ENCODE measurements at regions of chr12 and their contacts with region 1.

Region 1: DNA sequence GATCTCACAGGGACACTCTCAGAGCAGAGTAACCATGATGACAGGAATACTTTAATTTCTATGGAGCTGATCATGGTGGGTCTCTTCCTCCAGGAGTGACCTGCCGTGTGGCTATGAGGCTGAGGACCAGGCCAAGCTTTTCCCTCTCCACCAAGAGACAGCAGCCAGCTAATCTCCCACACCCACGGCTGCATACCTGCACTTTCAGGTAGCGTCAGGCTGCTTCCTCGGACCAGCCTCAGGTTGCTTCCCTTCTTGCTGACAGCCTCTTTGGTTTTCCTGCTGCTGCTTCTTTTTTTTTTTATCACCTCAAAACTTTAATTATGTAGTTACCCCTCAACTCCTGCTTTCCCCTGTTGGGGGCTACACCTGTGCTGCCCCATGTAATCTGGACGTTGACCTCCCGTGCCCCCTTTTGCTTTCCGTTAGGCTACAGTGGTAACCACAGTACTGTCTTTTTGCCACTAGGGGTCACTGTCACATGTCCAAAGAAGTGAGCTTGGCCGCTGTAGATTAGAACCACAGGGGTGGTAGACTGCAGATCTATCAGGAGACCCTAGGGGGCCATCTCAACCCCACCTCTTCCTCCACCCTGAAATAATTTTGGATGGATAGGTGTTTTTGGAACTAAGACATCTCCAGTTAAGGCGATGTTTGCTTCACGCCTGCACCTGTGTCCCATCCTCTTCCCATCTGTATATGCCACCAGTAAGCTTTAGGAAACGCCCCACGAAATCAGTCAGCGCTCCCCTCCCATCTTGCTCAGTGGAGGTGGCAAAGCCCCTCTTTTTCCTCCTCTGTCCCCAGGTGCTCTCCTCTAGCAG is 7.8 kb upstream of the PIP4K2C start:
- DNase-seq: peak; percentile 25 to 76
- H3K4me3 ChIP-seq: no peak overlapping the region
- H3K27ac ChIP-seq: no peak overlapping the region
- H3K4me1 ChIP-seq: no peaks in the 10 kb centered on the region
- H3K27me3 ChIP-seq: no peaks in the 10 kb centered on the region
- CTCF ChIP-seq: peak; percentile 71 to 99 (median 97)
- EP300 ChIP-seq: no peak
- POLR2A ChIP-seq: no peak
- RAD21 ChIP-seq: peak; percentile 88 to 94

Region 2: GRCh38 chr12:57541001-57541400 is 42.2 kb before region 1 on chr12:
- CTCF ChIA-PET with region 1: interaction called, 16 read pairs
- POLR2A ChIA-PET with region 1: no interaction called
- DNase-seq: no peak
- H3K4me3 ChIP-seq: no peak overlapping the region
- H3K27ac ChIP-seq: no peak overlapping the region
- H3K4me1 ChIP-seq: peaks cover 0 to 7% (median 1%) of the 10 kb centered on the region in 4 experiments; a peak in 5 of 7 replicates
- H3K27me3 ChIP-seq: no peaks in the 10 kb centered on the region
- CTCF ChIP-seq: no peak
- EP300 ChIP-seq: no peak
- POLR2A ChIP-seq: no peak
- RAD21 ChIP-seq: no peak

Region 3: GRCh38 chr12:57604454-57604991 is 21.3 kb after region 1 on chr12 and contains the start of gene DTX3:
- CTCF ChIA-PET with region 1: interaction called, 124 read pairs
- POLR2A ChIA-PET with region 1: interaction called, 9 read pairs
- DNase-seq: peak in 1 of 2 experiments; percentile 70
- H3K4me3 ChIP-seq: peak within 1 kb of the TSS; percentile 53 to 84 (median 78)
- H3K27ac ChIP-seq: peak within 1 kb of the TSS; percentile 93
- H3K4me1 ChIP-seq: peaks cover 7 to 11% (median 9%) of the 10 kb centered on the region in 4 experiments
- H3K27me3 ChIP-seq: 0 out of 7 replicates have a peak, but pooled peaks cover 0 to 4% (median 0%) of the 10 kb centered on the region in 4 experiments
- CTCF ChIP-seq: no peak
- EP300 ChIP-seq: no peak
- POLR2A ChIP-seq: peak in 1 of 2 experiments; percentile 18; a peak in 1 of 3 replicates
- RAD21 ChIP-seq: no peak
- total RNA-seq, gene DTX3: 41.8 and 43.4 TPM in 2 replicates

Region 4: GRCh38 chr12:57621497-57622292 is 38.5 kb after region 1 on chr12:
- CTCF ChIA-PET with region 1: interaction called, 201 read pairs
- POLR2A ChIA-PET with region 1: interaction called, 6 read pairs
- DNase-seq: peak in 1 of 2 experiments; percentile 87
- H3K4me3 ChIP-seq: peak overlapping the region; percentile 1 to 52 (median 24); a peak in 6 of 8 replicates
- H3K27ac ChIP-seq: no peak overlapping the region
- H3K4me1 ChIP-seq: peaks cover 0 to 20% (median 13%) of the 10 kb centered on the region in 4 experiments; a peak in 6 of 7 replicates
- H3K27me3 ChIP-seq: peaks cover 86 to 98% (median 98%) of the 10 kb centered on the region in 4 experiments
- CTCF ChIP-seq: peak in 2 of 3 experiments; percentile 83 to 89; a peak in 3 of 4 replicates
- EP300 ChIP-seq: no peak
- POLR2A ChIP-seq: no peak
- RAD21 ChIP-seq: peak; percentile 62 to 71

Region 5: GRCh38 chr12:57693659-57694458 is 110.6 kb after region 1 on chr12 and contains the start of gene OS9:
- CTCF ChIA-PET with region 1: interaction called, 10 read pairs
- POLR2A ChIA-PET with region 1: no interaction called
- DNase-seq: peak; percentile 85 to 97
- H3K4me3 ChIP-seq: peak within 1 kb of the TSS; percentile 66 to 99 (median 91)
- H3K27ac ChIP-seq: peak within 1 kb of the TSS; percentile 64; the same call in 1 of the 2 replicates
- H3K4me1 ChIP-seq: peaks cover 0 to 5% (median 1%) of the 10 kb centered on the region in 4 experiments; a peak in 1 of 7 replicates
- H3K27me3 ChIP-seq: no peaks in the 10 kb centered on the region
- CTCF ChIP-seq: peak; percentile 72 to 82 (median 78)
- EP300 ChIP-seq: no peak
- POLR2A ChIP-seq: peak; percentile 80 to 94
- RAD21 ChIP-seq: peak; percentile 51 to 52
- total RNA-seq, gene OS9: 71.0 and 74.3 TPM in 2 replicates

Region 6: DNA sequence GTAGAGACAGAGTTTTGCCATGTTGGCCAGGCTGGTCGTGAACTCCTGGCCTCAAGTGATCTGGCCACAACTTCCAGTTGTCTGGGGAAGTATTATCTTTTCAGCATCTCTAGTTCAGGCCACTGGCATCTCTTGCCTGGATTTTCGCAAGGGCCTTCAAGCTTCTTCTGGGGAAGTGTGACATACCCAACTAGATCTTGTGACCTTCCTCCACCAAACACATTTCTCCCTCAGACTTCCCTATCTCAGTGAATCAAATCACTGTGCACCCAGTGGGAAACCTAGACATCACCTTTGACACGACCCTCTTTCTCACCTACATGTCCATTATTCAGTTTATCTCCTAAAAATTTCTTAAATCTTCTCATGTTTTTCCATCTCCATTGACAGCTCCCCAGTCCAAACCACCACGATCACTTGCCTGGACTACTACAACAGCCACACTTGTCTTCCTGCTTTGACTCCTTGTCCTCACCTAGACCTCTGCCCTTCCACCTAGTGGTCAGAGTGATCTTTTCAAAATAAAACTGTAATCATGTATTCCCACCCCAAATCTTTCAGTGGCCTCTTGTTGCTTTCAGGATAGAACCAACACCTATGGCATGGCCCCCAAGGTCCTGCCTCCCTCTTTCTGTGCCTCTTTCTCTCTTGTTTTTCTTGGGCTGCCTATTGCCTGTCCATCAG is 192.5 kb after region 1 on chr12:
- CTCF ChIA-PET with region 1: no interaction called
- POLR2A ChIA-PET with region 1: no interaction called
- DNase-seq: no peak
- H3K4me3 ChIP-seq: no peak overlapping the region
- H3K27ac ChIP-seq: no peak overlapping the region
- H3K4me1 ChIP-seq: peaks cover 0 to 3% (median 1%) of the 10 kb centered on the region in 4 experiments; a peak in 2 of 7 replicates
- H3K27me3 ChIP-seq: peaks cover 0 to 4% (median 1%) of the 10 kb centered on the region in 4 experiments; a peak in 2 of 7 replicates
- CTCF ChIP-seq: peak in 1 of 3 experiments; percentile 29; a peak in 2 of 4 replicates
- EP300 ChIP-seq: no peak
- POLR2A ChIP-seq: no peak
- RAD21 ChIP-seq: no peak

Measured in H1 (cell line).